Activated T-helper 1 cell treated with anti-CD3 and anti-CD28 coated beads, Interleukin-12 subunit alpha, Interleukin-12 subunit beta, Interleukin-2, Interleukin-4 antibody, amounts not matched to agents 30 ng/mL and 10 ng/mL and 1 ng/mL, durations not matched to agents 14 hours and 24 hours and 36 hours (primary cell): ENCODE measurements at regions of chr18 and their contacts with region 1.

Region 1: DNA sequence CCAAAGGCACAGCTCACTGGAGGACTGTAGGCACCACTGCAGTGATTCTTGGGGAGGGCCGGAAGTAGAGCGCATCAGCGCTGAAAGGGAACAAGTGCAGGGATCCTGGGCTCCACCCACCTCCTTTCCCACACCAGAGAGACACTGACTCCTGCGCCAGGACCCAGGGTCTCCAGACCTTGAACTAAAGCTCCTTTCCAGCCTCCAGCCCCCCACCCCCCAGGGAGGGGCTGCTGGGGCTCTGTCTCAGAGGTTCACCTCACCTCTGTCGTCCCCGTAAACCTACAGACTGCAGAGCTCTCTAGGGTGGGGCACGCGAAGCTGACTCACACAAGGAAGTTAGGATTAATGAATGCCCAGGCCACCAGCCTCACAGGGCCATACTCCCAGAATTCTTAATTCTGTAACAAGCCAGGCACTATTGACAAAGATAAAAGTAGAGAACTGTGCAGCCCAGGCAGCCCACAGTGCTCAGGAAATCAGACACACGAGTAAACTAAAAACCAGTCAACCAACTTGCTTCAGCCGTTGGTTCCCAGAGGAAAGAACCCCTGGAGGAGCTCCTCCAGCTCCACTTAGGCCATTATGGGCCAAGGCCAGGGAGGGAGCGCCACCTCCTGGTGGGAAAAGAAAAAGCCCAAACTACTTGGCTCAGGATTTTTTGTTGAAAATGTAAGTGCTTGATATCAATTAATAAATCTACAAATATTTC is 45.1 kb upstream of the ACAA2 start:
- DNase-seq: peak; percentile 38
- H3K4me3 Mint-ChIP-seq: no peak overlapping the region
- H3K27ac Mint-ChIP-seq: no peak overlapping the region
- H3K4me1 Mint-ChIP-seq: peaks cover 4% of the 10 kb centered on the region
- H3K27me3 Mint-ChIP-seq: no peaks in the 10 kb centered on the region

Region 2: DNA sequence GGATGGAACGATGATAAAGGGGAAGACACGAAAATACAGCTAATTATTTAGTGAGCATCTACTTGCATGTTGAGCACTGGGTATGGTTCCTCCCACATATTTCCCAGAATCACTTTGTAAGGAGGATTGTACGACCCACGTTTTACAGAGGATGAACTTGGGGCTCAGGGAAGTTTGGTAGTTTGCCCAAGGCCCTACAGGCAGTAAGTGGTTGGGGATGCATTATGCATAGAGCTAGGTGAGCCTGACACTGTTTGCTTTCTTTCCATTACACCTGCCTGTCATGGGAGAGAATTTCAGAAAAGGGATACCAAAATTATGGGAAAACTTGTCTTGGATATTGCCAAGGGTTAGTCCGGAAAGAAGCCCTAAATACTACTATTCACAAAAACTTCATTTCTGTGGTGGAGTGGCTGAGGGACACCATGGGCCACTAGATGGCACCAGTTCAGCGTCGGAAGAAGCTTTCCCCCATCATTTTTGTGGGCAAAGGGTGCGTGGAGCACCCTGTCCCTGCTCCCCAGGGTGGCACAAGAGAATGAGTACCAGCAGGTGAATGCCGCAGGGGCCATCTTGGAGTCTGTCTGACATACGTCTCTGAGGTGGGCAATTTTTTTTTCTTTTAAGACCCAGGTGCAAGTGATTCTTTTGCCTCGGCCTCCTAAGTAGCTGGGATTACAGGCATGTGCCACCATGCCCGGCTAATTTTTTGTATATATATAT is 347.9 kb before region 1 on chr18:
- intact Hi-C with region 1: loop called (anchors 1 kb)
- DNase-seq: peak; percentile 24
- H3K4me3 Mint-ChIP-seq: no peak overlapping the region
- H3K27ac Mint-ChIP-seq: no peak overlapping the region
- H3K4me1 Mint-ChIP-seq: peaks cover 5% of the 10 kb centered on the region
- H3K27me3 Mint-ChIP-seq: peaks cover 17% of the 10 kb centered on the region

Region 3: DNA sequence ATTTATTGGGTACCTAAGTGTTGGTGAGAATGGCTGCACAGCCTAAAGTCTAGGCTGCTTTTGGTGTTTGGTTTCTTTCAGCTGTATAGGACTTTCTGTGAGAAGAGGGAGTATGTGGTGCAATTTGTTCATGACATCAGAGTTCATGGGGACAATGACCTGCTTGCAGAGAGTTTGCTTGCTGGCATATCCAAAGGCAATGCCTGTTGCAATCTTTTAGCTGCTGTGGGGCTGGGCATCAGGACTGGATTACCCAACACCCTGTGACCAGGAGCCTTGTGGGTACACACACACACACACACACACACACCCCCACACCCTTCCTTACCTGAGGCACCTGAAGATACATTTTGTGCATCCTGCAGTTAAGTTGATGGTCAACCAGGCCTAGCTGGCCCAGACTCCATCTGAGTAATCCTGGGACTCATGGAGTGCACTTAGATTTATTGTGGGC is 228.2 kb before region 1 on chr18:
- intact Hi-C with region 1: loop called (anchors 10 kb)
- DNase-seq: no peak
- H3K4me3 Mint-ChIP-seq: no peak overlapping the region
- H3K27ac Mint-ChIP-seq: no peak overlapping the region
- H3K4me1 Mint-ChIP-seq: no peaks in the 10 kb centered on the region
- H3K27me3 Mint-ChIP-seq: peaks cover 7% of the 10 kb centered on the region

Region 4: GRCh38 chr18:49728542-49728941 is 129.9 kb before region 1 on chr18:
- intact Hi-C with region 1: loop called (anchors 1 kb)
- DNase-seq: peak; percentile 12
- H3K4me3 Mint-ChIP-seq: no peak overlapping the region
- H3K27ac Mint-ChIP-seq: no peak overlapping the region
- H3K4me1 Mint-ChIP-seq: peaks cover 6% of the 10 kb centered on the region
- H3K27me3 Mint-ChIP-seq: peaks cover 11% of the 10 kb centered on the region

Region 5: GRCh38 chr18:49784427-49785185 is 73.9 kb before region 1 on chr18:
- intact Hi-C with region 1: loop called (anchors 5 kb)
- DNase-seq: no peak
- H3K4me3 Mint-ChIP-seq: no peak overlapping the region
- H3K27ac Mint-ChIP-seq: no peak overlapping the region
- H3K4me1 Mint-ChIP-seq: peaks cover 43% of the 10 kb centered on the region
- H3K27me3 Mint-ChIP-seq: no peaks in the 10 kb centered on the region

Region 6: DNA sequence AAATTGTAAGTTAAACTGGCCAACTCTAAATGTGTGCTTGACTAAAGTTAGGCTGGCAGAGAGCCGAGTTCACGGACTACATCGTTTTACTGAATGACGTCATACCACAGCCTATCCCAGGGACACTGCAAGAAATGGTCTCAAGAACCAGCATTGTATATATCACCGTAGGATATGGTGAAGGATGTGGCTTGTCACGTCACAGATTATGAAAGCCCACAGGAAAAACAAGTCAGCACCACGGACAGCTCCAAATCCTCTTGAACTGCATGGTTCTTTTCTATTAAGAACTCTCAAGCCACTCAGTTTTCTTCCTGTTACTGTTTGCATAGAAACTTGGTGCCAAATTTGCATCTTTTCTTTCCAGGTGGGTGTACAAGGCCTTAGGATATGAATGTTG is 40.0 kb after region 1 on chr18:
- intact Hi-C with region 1: no loop called
- DNase-seq: peak; percentile 68
- H3K4me3 Mint-ChIP-seq: no peak overlapping the region
- H3K27ac Mint-ChIP-seq: no peak overlapping the region
- H3K4me1 Mint-ChIP-seq: no peaks in the 10 kb centered on the region
- H3K27me3 Mint-ChIP-seq: no peaks in the 10 kb centered on the region